Endothelial cell of umbilical vein (primary cell): ENCODE measurements at regions of chr3 and their contacts with region 1.

Region 1: DNA sequence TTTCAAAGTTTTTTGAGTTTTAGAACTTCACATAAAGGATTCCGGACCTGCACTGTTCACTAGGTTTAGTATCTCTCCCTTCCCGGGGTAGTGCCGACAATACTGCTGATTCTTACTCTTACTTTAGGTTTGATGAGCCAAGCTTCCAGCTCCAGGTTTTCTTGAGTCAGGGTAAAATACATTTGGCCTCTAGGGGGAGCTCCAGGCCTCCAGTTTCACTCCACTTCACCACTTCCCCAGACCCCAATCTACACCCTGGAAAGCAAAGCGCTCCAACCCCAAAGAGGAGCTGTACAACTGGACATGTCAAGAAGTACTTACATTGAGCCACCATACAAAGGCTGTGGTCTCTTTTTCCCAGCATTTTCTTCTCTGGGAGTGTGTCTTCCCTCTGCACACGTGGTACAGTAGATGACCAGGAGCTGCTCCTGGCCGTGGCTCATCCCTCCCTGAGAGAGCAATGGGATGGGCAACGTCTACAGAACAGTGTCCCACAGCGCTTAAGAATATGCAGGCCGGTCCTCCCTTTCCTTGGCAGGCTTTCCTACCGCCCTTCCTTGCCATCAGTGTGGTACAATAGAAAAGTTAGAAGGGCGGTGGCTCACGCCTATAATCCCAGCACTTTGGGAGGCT is 93.9 kb upstream of the CCDC80 start:
- DNase-seq: peak; percentile 77
- H3K4me3 ChIP-seq: no peak overlapping the region
- H3K27ac ChIP-seq: no peak overlapping the region
- H3K4me1 ChIP-seq: no peaks in the 10 kb centered on the region
- H3K27me3 ChIP-seq: no peaks in the 10 kb centered on the region
- CTCF ChIP-seq: peak; percentile 79 to 80
- POLR2A ChIP-seq: no peak

Region 2: DNA sequence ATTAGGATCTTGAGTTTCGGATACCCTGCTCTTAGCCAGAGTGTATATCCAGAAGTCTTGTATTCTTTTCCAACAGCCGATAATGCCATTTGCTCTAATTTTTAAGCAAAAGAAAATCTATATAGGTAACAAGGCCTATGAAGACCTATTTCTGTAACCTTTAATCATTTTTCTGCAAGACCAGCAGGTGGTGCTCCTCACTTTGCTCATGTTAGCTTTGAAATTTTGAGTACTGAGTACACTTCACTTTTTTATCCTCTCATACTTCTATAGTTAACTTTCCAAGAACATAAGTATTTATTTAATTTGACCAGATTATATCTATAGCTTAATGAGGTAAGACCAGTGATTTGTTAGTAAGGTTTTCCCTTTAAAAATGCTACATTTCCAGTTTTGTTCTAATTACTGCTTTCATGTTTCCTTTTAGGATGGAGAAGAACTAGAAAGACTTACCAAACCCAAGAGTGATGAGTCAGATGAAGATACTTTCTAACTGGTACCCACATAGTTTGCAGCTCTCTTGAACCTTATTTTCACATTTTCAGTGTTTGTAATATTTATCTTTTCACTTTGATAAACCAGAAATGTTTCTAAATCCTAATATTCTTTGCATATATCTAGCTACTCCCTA is 152.5 kb before region 1 on chr3:
- CTCF ChIA-PET with region 1: interaction called, 22 read pairs
- POLR2A ChIA-PET with region 1: no interaction called
- dilution Hi-C with region 1: no loop called
- intact Hi-C with region 1: loop called (anchors 1 kb)
- DNase-seq: peak; percentile 77
- H3K4me3 ChIP-seq: no peak overlapping the region
- H3K27ac ChIP-seq: no peak overlapping the region
- H3K4me1 ChIP-seq: no peaks in the 10 kb centered on the region
- H3K27me3 ChIP-seq: no peaks in the 10 kb centered on the region
- CTCF ChIP-seq: peak; percentile 40 to 46
- POLR2A ChIP-seq: no peak

Region 3: DNA sequence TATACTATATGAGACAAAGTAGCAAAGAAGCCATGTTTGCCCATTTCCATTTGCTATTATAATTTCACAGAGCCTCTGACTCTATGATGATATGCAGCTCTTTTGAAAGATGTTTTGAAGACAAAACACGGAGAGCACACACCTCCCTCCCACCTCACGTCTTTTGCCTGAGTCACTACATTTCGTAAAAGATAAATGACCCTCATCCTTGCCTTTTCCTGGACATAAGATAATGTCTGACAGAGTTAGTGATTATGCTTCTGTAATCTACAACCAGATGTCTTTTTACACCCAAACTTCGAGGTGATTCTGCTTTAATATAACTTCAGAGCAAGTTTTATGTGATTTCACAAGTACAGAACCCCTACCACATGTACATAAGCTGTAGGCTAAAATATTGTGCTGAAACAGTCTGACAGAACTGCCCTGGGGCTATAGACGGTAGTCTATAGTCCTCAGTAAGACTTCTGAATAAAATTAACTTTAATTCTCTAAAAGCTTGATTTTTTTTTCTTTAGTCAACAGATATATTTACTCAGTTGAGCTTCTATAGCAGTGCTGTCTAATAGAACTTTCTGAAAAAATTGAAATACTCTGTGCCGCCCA is 11.9 kb after region 1 on chr3:
- CTCF ChIA-PET with region 1: interaction called, 26 read pairs
- POLR2A ChIA-PET with region 1: no interaction called
- dilution Hi-C with region 1: no loop called
- intact Hi-C with region 1: no loop called
- DNase-seq: no peak
- H3K4me3 ChIP-seq: no peak overlapping the region
- H3K27ac ChIP-seq: no peak overlapping the region
- H3K4me1 ChIP-seq: no peaks in the 10 kb centered on the region
- H3K27me3 ChIP-seq: no peaks in the 10 kb centered on the region
- CTCF ChIP-seq: no peak
- POLR2A ChIP-seq: no peak

Region 4: DNA sequence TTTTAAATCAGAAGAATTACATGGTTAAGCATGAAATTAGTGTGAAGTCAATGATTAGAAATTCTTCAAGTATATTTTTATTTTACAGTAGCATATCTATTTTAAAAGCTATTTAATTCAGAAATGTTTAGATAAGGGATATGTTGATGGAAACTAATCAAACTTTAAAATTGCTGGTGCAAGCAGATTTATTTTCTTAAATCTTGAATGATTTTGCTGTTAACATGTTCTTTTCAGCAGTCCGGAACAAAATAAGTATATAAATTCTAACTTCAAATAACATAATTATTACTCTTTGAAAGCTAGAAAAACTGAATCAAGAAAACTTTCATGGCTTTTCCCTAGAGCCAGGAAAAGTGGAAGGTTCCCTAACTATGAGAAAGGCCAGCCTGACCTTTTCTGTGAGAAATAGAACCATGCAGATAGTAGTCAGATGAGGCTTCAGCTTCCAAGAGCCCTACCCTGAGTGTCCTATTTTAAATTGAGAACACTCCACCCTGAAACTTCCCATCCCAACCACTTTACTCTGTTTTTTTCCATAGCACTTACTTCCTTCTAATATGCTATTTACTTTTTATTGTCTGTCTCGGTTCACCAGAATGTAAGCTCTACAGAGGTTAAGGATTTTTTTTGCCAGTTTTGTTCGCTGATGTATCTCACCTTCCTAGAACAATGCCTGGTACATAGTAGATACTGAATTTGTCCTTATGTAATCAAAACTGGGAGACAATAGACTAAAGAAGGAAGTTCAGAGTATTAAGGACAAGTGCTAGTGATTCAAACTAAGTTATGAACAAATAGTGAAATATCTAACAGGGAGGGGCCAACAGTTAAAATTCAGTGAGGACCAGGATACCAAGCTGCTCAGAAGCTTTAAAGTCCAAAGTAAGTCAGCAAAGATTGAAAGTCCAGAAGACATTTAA is 45.0 kb after region 1 on chr3:
- CTCF ChIA-PET with region 1: interaction called, 13 read pairs
- POLR2A ChIA-PET with region 1: no interaction called
- dilution Hi-C with region 1: no loop called
- intact Hi-C with region 1: no loop called
- DNase-seq: peak; percentile 11
- H3K4me3 ChIP-seq: no peak overlapping the region
- H3K27ac ChIP-seq: no peak overlapping the region
- H3K4me1 ChIP-seq: no peaks in the 10 kb centered on the region
- H3K27me3 ChIP-seq: no peaks in the 10 kb centered on the region
- CTCF ChIP-seq: no peak
- POLR2A ChIP-seq: no peak

Region 5: GRCh38 chr3:112966633-112967032 is 231.8 kb after region 1 on chr3:
- CTCF ChIA-PET with region 1: interaction called, 22 read pairs
- POLR2A ChIA-PET with region 1: no interaction called
- dilution Hi-C with region 1: no loop called
- intact Hi-C with region 1: no loop called
- DNase-seq: no peak
- H3K4me3 ChIP-seq: no peak overlapping the region
- H3K27ac ChIP-seq: no peak overlapping the region
- H3K4me1 ChIP-seq: no peaks in the 10 kb centered on the region
- H3K27me3 ChIP-seq: peaks cover 11 to 14% of the 10 kb centered on the region in 2 experiments
- CTCF ChIP-seq: no peak
- POLR2A ChIP-seq: no peak

Region 6: DNA sequence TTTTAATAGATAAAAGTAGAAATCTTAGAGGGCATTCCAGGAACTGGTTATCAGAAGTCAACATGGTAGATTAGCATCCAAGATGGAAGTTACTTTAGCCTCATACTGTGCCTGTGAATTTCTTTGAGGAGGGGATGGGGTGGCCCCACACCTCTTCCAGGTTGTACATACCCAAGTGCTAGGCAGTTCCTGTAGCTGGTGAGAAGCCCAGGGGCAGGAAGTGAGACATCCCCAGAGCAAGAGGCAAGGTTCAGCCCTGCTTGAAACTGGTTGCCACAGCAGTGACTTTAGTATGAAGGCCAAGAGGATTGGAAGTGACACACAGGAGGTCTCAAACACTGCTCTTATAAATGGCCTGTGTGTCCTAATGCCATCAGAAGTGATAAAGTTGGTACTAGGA is 267.8 kb after region 1 on chr3:
- CTCF ChIA-PET with region 1: interaction called, 14 read pairs
- POLR2A ChIA-PET with region 1: no interaction called
- dilution Hi-C with region 1: no loop called
- intact Hi-C with region 1: no loop called
- DNase-seq: no peak
- H3K4me3 ChIP-seq: no peak overlapping the region
- H3K27ac ChIP-seq: no peak overlapping the region
- H3K4me1 ChIP-seq: peaks cover 7% of the 10 kb centered on the region
- H3K27me3 ChIP-seq: no peaks in the 10 kb centered on the region
- CTCF ChIP-seq: no peak
- POLR2A ChIP-seq: no peak

Region 7: DNA sequence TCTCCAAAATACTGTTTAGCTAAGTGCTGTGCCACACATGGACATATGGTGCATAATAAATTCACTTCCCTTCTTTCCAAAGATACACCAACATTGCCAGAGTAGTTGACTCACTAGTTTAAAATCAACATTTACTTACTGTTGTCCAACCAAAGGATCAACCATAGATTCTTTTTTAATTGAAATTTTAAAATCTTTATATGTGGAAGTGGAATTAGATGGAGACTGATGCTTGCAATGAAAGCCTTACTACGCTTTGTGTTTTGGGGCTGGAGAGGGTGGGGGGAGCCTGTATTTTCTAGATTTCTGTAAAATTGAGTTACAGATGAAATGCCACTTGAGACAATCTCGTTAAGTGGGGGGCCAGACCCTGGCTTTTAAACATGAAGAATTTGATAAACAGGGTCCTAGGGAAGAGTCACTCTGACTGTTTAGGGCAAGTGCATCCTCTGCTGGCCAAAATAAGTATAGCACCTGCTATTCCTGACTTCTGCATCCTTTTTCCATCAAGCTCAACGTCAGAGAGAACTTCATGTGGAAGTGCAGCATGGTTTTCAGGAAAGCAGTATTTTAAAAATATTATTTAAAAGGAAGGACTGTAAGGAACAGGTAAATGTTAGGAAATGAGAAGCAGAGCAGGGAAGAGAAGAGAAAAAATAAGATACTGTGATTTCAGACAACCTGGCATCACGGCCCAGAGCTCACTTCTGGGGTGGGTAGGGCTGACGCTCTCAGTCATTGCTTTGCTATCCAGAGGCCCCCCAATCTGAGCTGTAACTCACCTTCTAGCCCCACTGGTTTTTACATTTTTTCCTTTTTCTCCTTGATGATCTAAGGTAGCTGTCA is 553.2 kb after region 1 on chr3:
- CTCF ChIA-PET with region 1: interaction called, 20 read pairs
- POLR2A ChIA-PET with region 1: no interaction called
- dilution Hi-C with region 1: no loop called
- intact Hi-C with region 1: no loop called
- DNase-seq: peak; percentile 75
- H3K4me3 ChIP-seq: no peak overlapping the region
- H3K27ac ChIP-seq: no peak overlapping the region
- H3K4me1 ChIP-seq: peaks cover 8% of the 10 kb centered on the region
- H3K27me3 ChIP-seq: no peaks in the 10 kb centered on the region
- CTCF ChIP-seq: peak; percentile 89 to 95
- POLR2A ChIP-seq: no peak